ENCODE measurements at regions of chr17 and their contacts with region 1.

Region 1: GRCh38 chr17:37358830-37359681 is 16.7 kb upstream of the C17orf78 start:
- DNase-seq: peak; percentile 90
- H3K4me3 ChIP-seq: peak overlapping the region; percentile 73 to 86 (median 80)
- H3K27ac ChIP-seq: peak overlapping the region; percentile 48
- H3K4me1 ChIP-seq: peaks cover 43% of the 10 kb centered on the region
- H3K27me3 ChIP-seq: no peaks in the 10 kb centered on the region
- CTCF ChIP-seq: no peak

Region 2: GRCh38 chr17:36869856-36870719 is 489.0 kb before region 1 on chr17:
- CTCF ChIA-PET with region 1: no interaction called
- dilution Hi-C with region 1: no loop called
- in situ Hi-C with region 1: no loop called
- intact Hi-C with region 1: loop called (anchors 10 kb)
- DNase-seq: peak; percentile 24
- H3K4me3 ChIP-seq: no peak overlapping the region
- H3K27ac ChIP-seq: no peak overlapping the region
- H3K4me1 ChIP-seq: no peaks in the 10 kb centered on the region
- H3K27me3 ChIP-seq: no peaks in the 10 kb centered on the region
- CTCF ChIP-seq: peak in 1 of 2 donors; percentile 25

Region 3: DNA sequence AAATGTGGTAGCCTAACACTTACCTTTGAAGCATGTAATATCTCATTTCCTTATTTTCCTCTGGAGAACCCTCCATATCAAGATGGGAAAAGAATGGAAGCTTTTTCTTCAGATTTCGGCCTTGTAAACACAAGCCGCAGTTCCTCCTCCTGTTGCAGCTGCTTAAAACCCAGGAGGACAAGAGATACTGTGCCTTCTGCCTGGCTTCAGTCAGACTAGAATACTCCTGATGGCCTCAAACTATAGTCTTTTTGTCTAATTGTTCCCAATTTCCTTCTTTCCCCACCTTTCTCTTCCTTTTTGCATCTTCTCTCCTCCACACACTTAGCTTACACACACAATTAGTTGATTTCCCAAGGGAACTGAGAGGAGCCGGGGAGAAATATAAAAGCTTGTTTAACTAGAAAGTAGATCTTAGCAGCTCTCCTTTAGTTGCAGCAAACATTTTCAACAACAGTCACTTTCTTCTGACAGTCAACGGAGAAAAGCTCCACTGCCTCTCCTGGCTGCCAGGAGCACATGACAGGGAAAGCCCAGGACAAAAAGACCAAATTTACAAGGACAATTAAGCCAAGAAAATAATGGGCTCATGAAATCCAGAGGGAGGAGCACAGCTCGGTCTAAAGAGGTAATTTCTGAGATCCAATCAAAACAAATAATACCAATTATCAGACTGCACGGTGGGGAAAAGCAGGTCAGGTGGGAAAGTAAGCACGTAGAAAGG is 59.6 kb before region 1 on chr17:
- CTCF ChIA-PET with region 1: interaction called, 10 read pairs
- dilution Hi-C with region 1: no loop called
- in situ Hi-C with region 1: no loop called
- intact Hi-C with region 1: no loop called
- DNase-seq: no peak
- H3K4me3 ChIP-seq: no peak overlapping the region
- H3K27ac ChIP-seq: no peak overlapping the region
- H3K4me1 ChIP-seq: peaks cover 11% of the 10 kb centered on the region
- H3K27me3 ChIP-seq: no peaks in the 10 kb centered on the region
- CTCF ChIP-seq: no peak